Panc1 (cell line): ENCODE measurements at regions of chr1 and their contacts with region 1.

Region 1: GRCh38 chr1:153141377-153141776 is 9.3 kb downstream of the SPRR2G start:
- DNase-seq: no peak
- ATAC-seq: no peak
- H3K4me3 ChIP-seq: no peak overlapping the region
- H3K27ac ChIP-seq: no peak overlapping the region
- H3K4me1 ChIP-seq: no peaks in the 10 kb centered on the region
- H3K27me3 ChIP-seq: peaks cover 12% of the 10 kb centered on the region
- CTCF ChIP-seq: no peak

Region 2: DNA sequence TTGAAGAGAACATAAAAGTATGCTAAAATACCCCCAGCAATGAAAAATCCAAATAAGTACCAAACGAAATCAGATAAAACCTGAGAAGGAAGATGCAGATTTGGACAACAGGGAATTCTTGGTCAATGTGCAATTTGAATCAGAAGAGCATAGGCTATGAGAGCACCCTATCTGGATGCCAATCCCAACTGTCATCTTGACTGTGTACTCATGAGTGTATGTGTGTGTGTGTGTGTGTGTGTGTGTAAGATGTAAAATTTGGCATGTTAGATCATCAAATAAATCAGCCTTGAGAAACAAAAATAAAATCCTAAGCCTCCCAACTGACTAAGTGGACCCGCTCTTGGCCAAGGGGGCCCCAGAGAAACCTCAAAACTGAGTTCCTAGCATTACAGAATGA is 27.3 kb after region 1 on chr1:
- CTCF ChIA-PET with region 1: no interaction called
- POLR2A ChIA-PET with region 1: no interaction called
- in situ Hi-C with region 1: no loop called
- intact Hi-C with region 1: no loop called
- DNase-seq: no peak
- ATAC-seq: no peak
- H3K4me3 ChIP-seq: no peak overlapping the region
- H3K27ac ChIP-seq: no peak overlapping the region
- H3K4me1 ChIP-seq: no peaks in the 10 kb centered on the region
- H3K27me3 ChIP-seq: peaks cover 2% of the 10 kb centered on the region; the same call in 1 of the 2 replicates
- CTCF ChIP-seq: no peak

Region 3: GRCh38 chr1:153202006-153202405 is 60.6 kb after region 1 on chr1:
- CTCF ChIA-PET with region 1: no interaction called
- POLR2A ChIA-PET with region 1: no interaction called
- in situ Hi-C with region 1: no loop called
- intact Hi-C with region 1: loop called (anchors 10 kb)
- DNase-seq: no peak
- ATAC-seq: no peak
- H3K4me3 ChIP-seq: no peak overlapping the region
- H3K27ac ChIP-seq: no peak overlapping the region
- H3K4me1 ChIP-seq: no peaks in the 10 kb centered on the region
- H3K27me3 ChIP-seq: peaks cover 24% of the 10 kb centered on the region
- CTCF ChIP-seq: no peak

Region 4: DNA sequence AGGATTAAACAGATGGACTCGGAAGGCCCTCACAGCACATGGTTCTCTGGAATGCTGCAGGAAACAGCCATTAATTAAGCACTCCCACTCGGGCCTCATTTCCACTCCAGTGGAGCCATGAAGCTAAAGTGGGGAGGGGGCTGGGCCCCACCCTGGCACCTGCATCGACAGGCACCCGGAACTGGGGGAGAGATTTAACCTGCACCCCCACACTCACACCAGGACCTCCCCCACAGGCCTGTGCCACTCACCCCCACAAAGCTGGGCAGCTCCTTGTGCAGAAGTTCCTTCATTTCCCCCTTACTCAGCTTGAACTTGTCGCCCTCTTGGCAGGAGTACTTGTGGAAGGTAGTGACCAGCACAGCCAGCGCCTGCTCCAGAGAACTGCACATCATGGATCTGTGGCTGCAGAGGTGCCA is 422.1 kb after region 1 on chr1:
- CTCF ChIA-PET with region 1: no interaction called
- POLR2A ChIA-PET with region 1: no interaction called
- in situ Hi-C with region 1: no loop called
- intact Hi-C with region 1: no loop called
- DNase-seq: no peak
- ATAC-seq: no peak
- H3K4me3 ChIP-seq: no peak overlapping the region
- H3K27ac ChIP-seq: peak overlapping the region; percentile 86
- H3K4me1 ChIP-seq: peaks cover 50% of the 10 kb centered on the region
- H3K27me3 ChIP-seq: no peaks in the 10 kb centered on the region
- CTCF ChIP-seq: no peak